ENCODE measurements at regions of chr5 and their contacts with region 1.

Region 1: DNA sequence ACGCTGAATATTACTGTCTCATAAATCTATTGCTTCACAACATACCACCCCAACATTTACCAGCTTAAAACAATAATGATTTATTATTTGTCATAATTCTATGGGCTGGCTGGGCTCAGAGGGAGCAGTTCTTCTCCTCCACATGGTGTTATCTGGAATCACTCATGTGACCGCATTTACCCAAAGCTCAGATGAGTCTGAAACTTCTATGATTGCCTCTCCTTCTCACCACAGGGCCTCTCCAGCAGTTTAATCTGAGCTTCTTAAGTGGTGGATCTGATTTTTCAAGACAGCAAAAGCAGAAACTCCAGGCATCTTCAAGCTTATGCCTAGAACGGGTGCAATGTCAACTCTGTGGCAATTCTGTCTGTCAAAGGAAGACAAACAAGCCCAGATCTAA is 210.3 kb upstream of the ADRA1B start:
- DNase-seq: no peak
- ATAC-seq: no peak
- H3K4me3 ChIP-seq: no peak overlapping the region
- H3K27ac ChIP-seq: no peak overlapping the region
- H3K4me1 ChIP-seq: no peaks in the 10 kb centered on the region
- H3K27me3 ChIP-seq: no peaks in the 10 kb centered on the region
- CTCF ChIP-seq: no peak

Region 2: DNA sequence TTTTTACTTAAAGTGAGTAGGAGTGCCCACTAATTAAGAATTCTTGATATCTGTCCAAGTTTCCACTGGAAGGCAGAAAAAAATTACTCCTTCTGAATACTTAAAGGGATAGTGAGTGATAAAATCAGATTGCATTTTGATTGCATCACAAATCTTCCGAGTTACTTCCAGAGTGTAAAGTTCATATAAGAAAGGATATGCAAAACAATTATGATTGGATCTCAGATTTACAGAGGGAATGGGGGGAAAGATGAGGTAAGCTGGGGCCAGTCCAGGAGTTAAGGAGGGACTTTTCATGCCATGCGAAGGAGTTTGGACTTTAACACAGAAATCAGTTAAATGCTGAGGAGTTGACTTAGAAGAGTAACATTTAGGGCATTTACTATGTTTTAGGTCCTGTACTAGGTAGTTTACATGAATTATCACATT is 487.3 kb before region 1 on chr5:
- CTCF ChIA-PET with region 1: no interaction called
- POLR2A ChIA-PET with region 1: no interaction called
- in situ Hi-C with region 1: no loop called
- intact Hi-C with region 1: no loop called
- DNase-seq: no peak
- ATAC-seq: no peak
- H3K4me3 ChIP-seq: no peak overlapping the region
- H3K27ac ChIP-seq: peak overlapping the region; percentile 12; the same call in 1 of the 2 replicates
- H3K4me1 ChIP-seq: no peaks in the 10 kb centered on the region
- H3K27me3 ChIP-seq: no peaks in the 10 kb centered on the region
- CTCF ChIP-seq: no peak

Region 3: GRCh38 chr5:159515909-159516415 is 190.0 kb before region 1 on chr5:
- CTCF ChIA-PET with region 1: interaction called, 12 read pairs
- POLR2A ChIA-PET with region 1: no interaction called
- in situ Hi-C with region 1: no loop called
- intact Hi-C with region 1: no loop called
- DNase-seq: no peak
- ATAC-seq: 0 out of 2 replicates have a peak, but pooled peaks have one; percentile 75
- H3K4me3 ChIP-seq: no peak overlapping the region
- H3K27ac ChIP-seq: no peak overlapping the region
- H3K4me1 ChIP-seq: no peaks in the 10 kb centered on the region
- H3K27me3 ChIP-seq: no peaks in the 10 kb centered on the region
- CTCF ChIP-seq: peak; percentile 91

Region 4: DNA sequence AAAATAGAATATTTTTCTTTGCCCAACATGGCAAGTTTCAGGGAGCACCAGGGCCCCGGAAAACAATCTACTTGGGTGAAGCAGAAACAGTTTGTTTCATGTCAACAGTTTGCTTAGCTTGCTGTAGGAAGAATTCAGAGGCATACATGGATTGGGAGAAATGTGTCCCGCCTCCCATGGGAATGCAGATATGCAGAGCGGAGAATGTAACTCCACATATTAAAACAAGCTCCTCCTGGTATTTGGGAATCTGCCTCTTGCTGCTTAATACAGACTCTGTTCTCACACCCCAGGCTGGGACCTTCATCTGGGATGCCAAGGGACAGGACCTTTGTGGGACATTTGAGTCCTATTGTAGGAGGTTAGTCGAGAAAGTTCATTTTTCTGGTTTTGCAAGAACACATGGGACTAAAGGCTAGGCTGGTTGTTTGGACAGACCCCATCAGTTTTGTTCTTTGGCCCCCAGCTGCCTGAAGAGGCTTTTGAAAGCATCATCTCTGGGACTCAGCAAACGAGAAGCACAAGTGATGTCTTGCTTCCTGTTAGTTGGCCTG is 10.1 kb before region 1 on chr5:
- CTCF ChIA-PET with region 1: interaction called, 13 read pairs
- POLR2A ChIA-PET with region 1: no interaction called
- in situ Hi-C with region 1: no loop called
- intact Hi-C with region 1: no loop called
- DNase-seq: no peak
- ATAC-seq: no peak
- H3K4me3 ChIP-seq: no peak overlapping the region
- H3K27ac ChIP-seq: no peak overlapping the region
- H3K4me1 ChIP-seq: no peaks in the 10 kb centered on the region
- H3K27me3 ChIP-seq: no peaks in the 10 kb centered on the region
- CTCF ChIP-seq: no peak